Activated B cell treated with CpG ODN at 0.5 μM for 24 hours (primary cell): ENCODE measurements at regions of chr3 and their contacts with region 1.

Region 1: DNA sequence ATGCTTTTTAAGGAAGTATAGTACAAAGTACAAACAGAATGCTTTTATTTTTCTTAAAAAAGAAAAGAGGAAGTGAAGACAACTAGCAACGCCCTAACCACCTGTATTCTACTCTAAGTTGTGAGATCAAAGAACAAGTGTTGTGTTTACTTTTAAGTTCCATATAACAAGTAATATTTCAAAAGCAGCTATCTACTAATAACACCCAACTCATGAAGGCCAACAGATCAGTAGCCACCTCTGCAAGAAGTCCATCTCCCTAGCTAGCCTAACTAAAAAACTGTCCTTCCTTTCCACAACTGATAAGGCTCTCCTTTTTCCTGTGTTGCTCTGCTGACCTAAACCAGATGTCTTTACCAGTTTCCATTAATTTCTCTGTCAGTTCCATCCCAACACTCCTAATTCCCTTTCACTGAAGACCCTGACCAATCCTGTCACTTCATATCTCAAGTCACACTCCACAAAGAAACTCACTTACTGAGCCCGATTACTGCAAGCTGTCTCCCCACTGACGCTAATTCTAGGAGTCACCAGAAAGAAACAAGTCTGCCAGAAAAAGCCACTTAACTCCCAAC is 26.9 kb downstream of the PHC3 start:
- DNase-seq: no peak
- ATAC-seq: peak; percentile 87
- H3K4me3 Mint-ChIP-seq: peak overlapping the region; percentile 78
- H3K27ac Mint-ChIP-seq: peak overlapping the region; percentile 99
- H3K4me1 Mint-ChIP-seq: peaks cover 66% of the 10 kb centered on the region
- H3K27me3 Mint-ChIP-seq: no peaks in the 10 kb centered on the region
- CTCF ChIP-seq: no peak

Region 2: GRCh38 chr3:170137986-170138385 is 16.7 kb before region 1 on chr3:
- CTCF ChIA-PET with region 1: no interaction called
- POLR2A ChIA-PET with region 1: interaction called, 4 read pairs
- intact Hi-C with region 1: loop called (anchors 2 kb)
- DNase-seq: no peak
- ATAC-seq: no peak
- H3K4me3 Mint-ChIP-seq: no peak overlapping the region
- H3K27ac Mint-ChIP-seq: peak overlapping the region; percentile 24
- H3K4me1 Mint-ChIP-seq: peaks cover 6% of the 10 kb centered on the region
- H3K27me3 Mint-ChIP-seq: no peaks in the 10 kb centered on the region
- CTCF ChIP-seq: no peak

Region 3: GRCh38 chr3:170171563-170171962 is 16.9 kb after region 1 on chr3:
- CTCF ChIA-PET with region 1: no interaction called
- POLR2A ChIA-PET with region 1: interaction called, 3 read pairs
- intact Hi-C with region 1: loop called (anchors 2 kb)
- DNase-seq: no peak
- ATAC-seq: no peak
- H3K4me3 Mint-ChIP-seq: no peak overlapping the region
- H3K27ac Mint-ChIP-seq: peak overlapping the region; percentile 46
- H3K4me1 Mint-ChIP-seq: peaks cover 39% of the 10 kb centered on the region
- H3K27me3 Mint-ChIP-seq: no peaks in the 10 kb centered on the region
- CTCF ChIP-seq: no peak